Activated CD4-positive, alpha-beta T cell treated with anti-CD3 and anti-CD28 coated beads for 36 hours (primary cell): ENCODE measurements at regions of chr9 and their contacts with region 1.

Region 1: GRCh38 chr9:96217754-96218693 is 84.0 kb downstream of the HSD17B3 start:
- DNase-seq: peak; percentile 86
- ATAC-seq: peak; percentile 90
- H3K4me3 Mint-ChIP-seq: peak overlapping the region; percentile 57
- H3K27ac Mint-ChIP-seq: peak overlapping the region; percentile 42
- H3K4me1 Mint-ChIP-seq: peaks cover 9% of the 10 kb centered on the region
- H3K27me3 Mint-ChIP-seq: peaks cover 50% of the 10 kb centered on the region

Region 2: DNA sequence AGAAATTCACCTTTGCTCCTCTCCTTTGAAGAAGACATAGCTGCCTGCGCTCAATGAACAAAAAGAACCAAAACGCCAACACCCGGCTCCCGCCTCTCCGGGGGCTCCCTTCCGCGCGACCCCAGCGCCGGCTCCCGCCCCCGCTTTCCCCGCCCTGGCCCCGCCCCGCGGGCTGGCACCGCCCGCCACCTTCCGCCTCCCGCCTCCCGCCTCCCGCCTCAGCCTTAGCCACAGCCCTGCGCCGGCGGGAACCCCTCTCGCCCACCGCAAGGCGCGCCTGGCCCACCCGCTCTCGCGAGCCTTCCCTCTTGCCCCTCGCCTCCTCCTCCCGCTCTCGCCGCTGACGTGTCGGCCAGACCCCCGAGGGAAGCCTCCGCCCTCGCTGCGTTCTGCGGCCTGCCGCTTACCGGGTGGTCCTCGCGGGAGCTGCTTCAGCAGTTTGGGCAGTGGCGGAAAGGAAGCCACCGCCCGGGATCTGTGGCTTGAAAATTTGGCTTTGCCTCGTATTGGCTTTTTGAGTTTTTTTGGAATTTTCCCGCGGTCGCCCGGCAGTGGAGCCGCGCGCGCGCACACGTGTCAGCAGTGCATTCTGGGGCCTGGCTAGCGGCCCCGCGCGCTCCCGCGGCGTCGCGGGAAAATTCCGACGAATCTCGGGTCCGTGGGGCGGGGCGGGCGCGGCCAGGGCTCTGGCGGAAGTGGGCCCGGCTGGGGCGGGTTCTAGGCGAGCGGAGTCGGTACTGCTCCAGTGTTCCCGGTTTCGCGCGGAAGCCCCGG is 900.7 kb before region 1 on chr9 and contains the start of gene FANCC:
- CTCF ChIA-PET with region 1: no interaction called
- POLR2A ChIA-PET with region 1: no interaction called
- intact Hi-C with region 1: loop called in 1 of 2 experiments (anchors 1 kb)
- DNase-seq: peak; percentile 90
- ATAC-seq: peak; percentile 84
- H3K4me3 Mint-ChIP-seq: peak within 1 kb of the TSS; percentile 85
- H3K27ac Mint-ChIP-seq: peak within 1 kb of the TSS; percentile 95
- H3K4me1 Mint-ChIP-seq: peaks cover 15% of the 10 kb centered on the region
- H3K27me3 Mint-ChIP-seq: peaks cover 7% of the 10 kb centered on the region
- total RNA-seq, gene FANCC: 15.9 to 16.7 TPM

Region 3: DNA sequence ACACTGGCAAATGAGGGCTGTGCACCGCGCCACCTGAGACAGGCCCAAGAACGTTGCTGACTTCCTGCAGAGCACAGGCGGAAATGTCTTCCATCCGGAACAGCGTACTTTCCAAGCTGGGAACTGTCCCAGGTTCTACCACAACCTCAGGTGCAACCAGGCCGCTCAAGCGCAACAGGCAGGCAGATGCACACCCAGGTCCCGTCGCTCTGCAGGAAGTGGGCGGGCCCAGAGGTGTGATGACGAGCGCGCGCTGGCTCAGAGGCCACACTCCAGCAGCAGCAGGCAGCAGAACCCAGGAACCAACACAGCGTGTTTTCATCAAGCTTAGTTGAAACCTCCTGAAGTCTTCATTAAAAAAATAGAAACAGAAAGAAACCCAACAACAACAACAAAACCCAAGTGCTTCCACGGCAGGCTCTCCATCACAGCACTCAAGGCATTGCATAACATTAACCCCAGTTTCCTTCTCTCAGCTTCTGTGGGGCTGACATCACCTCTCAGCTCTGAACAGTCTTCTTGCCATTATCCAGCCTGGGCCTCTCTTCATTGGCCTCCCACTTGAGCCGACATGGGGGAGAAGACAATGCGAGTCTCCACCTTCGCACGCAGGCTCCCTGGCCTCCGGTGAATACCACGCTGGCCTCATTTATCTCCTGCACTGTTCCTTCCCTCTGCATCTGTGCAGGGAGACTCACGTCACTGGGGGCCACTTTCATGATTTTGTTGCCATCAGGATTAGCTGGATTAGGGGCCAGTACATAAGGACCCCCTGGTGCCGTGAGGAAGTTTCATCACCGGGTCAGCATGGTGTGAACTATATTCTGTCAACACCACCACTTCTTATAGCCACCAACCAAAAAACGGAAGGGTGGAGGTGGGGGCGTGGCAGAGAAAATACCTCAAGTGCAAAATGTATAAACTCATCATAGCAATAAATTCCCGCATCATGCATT is 723.3 kb before region 1 on chr9:
- CTCF ChIA-PET with region 1: interaction called, 3 read pairs
- POLR2A ChIA-PET with region 1: no interaction called
- intact Hi-C with region 1: loop called in 1 of 2 experiments (anchors 5 kb)
- DNase-seq: peak; percentile 92
- ATAC-seq: peak; percentile 98
- H3K4me3 Mint-ChIP-seq: peak overlapping the region; percentile 68
- H3K27ac Mint-ChIP-seq: peak overlapping the region; percentile 93
- H3K4me1 Mint-ChIP-seq: peaks cover 68% of the 10 kb centered on the region
- H3K27me3 Mint-ChIP-seq: no peaks in the 10 kb centered on the region

Region 4: DNA sequence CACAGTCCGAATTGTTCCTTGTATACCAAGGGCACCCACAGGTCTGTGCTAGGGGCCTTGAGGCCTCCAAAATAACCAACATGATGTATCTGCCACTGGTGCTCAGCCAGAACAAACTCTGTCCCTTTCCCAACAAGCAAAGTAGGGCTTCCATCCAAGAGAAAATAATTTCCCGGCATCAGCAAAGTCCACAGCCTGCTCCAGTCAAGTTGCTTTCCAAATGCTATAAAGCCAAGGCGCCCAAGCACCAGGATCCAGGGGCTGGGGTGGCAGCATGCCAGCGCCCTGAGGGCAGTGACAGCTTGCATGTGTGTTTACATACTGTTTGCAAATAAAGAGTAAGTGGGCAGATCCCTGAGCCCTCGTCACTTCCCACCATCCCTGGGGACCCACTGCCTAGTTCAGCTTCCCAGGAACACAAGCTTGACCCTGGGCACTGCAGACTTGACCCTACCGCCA is 186.6 kb before region 1 on chr9:
- CTCF ChIA-PET with region 1: no interaction called
- POLR2A ChIA-PET with region 1: no interaction called
- intact Hi-C with region 1: no loop called
- DNase-seq: no peak
- ATAC-seq: no peak
- H3K4me3 Mint-ChIP-seq: no peak overlapping the region
- H3K27ac Mint-ChIP-seq: no peak overlapping the region
- H3K4me1 Mint-ChIP-seq: peaks cover 12% of the 10 kb centered on the region
- H3K27me3 Mint-ChIP-seq: peaks cover 25% of the 10 kb centered on the region

Region 5: DNA sequence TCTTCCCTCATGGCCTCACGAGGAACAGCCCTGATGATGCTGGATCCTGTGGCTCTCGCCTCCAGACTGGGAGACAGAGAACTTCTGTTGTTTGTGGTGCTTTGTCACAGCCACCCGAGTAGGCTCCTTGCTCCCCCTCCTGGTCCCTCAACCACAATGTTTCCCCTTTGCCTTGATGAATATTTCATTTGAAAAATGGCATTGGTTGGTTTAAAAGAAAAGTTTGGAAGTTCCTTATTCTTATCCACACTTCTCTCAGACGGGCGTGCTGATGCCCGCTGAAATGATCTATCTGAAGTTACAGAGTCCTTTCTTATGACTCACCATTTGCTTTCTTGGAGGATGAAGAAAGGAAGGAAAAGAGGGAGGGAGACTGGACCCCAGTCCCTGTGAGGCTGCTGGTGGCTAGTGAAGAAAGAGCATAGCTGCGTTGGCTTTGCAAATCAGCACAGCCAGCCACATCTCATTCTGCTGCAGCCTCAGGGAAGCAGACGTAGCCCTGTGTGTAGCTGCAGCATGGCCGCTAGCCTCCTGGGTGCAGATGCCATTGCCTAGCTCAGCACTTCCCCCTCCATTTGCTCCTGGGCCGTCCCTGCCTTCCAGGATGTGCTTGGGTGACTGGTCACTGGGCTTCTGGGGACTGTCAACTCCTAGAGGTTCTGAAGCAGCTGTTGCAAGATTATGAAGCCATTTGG is 156.6 kb before region 1 on chr9:
- CTCF ChIA-PET with region 1: no interaction called
- POLR2A ChIA-PET with region 1: no interaction called
- intact Hi-C with region 1: loop called (anchors 10 kb)
- DNase-seq: peak; percentile 63
- ATAC-seq: peak; percentile 78
- H3K4me3 Mint-ChIP-seq: no peak overlapping the region
- H3K27ac Mint-ChIP-seq: no peak overlapping the region
- H3K4me1 Mint-ChIP-seq: peaks cover 8% of the 10 kb centered on the region
- H3K27me3 Mint-ChIP-seq: no peaks in the 10 kb centered on the region

Region 6: DNA sequence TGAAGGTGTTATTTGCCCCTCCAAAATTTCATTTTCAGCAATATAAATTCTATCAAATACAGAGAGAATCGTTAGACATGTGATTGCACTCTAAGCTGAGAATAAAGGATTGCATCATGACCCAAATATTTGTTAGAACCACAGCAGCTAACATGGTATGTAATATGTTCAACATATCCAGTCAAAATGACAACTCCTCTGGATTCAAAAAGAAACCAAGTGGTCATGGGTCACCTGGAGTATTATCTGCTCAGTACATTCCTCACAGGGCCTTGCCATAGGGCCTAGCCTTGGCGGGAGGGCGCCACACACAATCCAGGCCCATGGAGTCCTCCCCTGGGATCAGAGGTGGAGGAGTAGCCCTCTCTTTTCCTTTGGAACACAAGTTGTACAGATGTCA is 95.3 kb before region 1 on chr9:
- CTCF ChIA-PET with region 1: no interaction called
- POLR2A ChIA-PET with region 1: no interaction called
- intact Hi-C with region 1: no loop called
- DNase-seq: no peak
- ATAC-seq: no peak
- H3K4me3 Mint-ChIP-seq: no peak overlapping the region
- H3K27ac Mint-ChIP-seq: no peak overlapping the region
- H3K4me1 Mint-ChIP-seq: peaks cover 2% of the 10 kb centered on the region
- H3K27me3 Mint-ChIP-seq: peaks cover 6% of the 10 kb centered on the region

Region 7: DNA sequence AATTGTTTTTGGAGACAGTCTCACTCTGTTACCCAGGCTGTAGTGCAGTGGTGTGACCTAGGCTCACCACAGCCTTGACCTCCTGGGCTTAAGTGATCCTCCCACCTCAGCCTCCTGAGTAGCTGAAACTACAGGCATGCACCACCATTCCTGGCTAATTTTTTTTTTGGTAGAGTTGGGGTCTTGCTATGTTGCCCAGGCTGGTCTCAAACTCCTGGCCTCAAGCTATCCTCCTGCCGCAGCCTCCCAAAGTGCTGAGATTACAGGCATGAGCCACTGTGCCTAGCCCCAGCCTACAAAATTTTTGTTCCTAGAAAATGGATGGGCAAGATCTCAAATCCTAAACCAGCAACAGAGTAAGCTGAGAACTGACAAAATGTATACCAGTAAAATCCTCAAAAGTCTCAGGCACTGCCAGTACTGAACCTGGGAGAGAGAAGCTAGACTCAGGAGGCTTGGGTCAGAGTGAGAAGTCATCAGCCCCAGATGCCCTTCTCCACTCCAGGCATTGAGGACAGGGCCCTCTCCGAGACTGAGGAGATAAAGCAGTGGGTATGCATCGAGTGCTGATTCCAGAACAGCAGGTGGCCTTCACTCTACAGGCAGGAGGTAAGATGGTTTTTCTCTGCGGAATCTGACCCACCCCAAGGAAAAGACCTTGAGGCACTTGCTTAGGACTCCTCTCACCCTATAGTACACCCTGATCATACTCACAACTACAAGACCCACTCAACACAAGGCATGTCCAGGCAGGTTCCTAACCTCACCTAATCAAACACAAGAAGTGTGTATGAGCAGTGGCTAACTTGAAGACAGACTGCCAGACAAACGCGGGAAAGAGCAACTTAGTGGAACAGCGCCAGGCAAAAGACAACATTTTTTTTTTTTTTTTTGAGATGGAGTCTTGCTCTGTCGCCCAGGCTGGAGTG is 48.5 kb after region 1 on chr9:
- CTCF ChIA-PET with region 1: no interaction called
- POLR2A ChIA-PET with region 1: no interaction called
- intact Hi-C with region 1: no loop called
- DNase-seq: no peak
- ATAC-seq: no peak
- H3K4me3 Mint-ChIP-seq: no peak overlapping the region
- H3K27ac Mint-ChIP-seq: no peak overlapping the region
- H3K4me1 Mint-ChIP-seq: no peaks in the 10 kb centered on the region
- H3K27me3 Mint-ChIP-seq: peaks cover 20% of the 10 kb centered on the region